Ovary (tissue), 10 donors: ENCODE measurements at regions of chr11 and their contacts with region 1.

Region 1: GRCh38 chr11:129943036-129943435 is 47.7 kb upstream of the NFRKB start:
- DNase-seq: no peak
- H3K4me3 ChIP-seq: no peak overlapping the region
- H3K27ac ChIP-seq: no peak overlapping the region
- H3K4me1 ChIP-seq: no peaks in the 10 kb centered on the region
- H3K27me3 ChIP-seq: no peaks in the 10 kb centered on the region
- CTCF ChIP-seq: no peak
- EP300 ChIP-seq: no peak
- POLR2A ChIP-seq: no peak

Region 2: GRCh38 chr11:130124096-130124495 is 181.1 kb after region 1 on chr11:
- intact Hi-C with region 1: loop called in 1 of 4 experiments (anchors 5 kb)
- DNase-seq: peak in 1 of 5 donors; percentile 38
- H3K4me3 ChIP-seq: no peak overlapping the region
- H3K27ac ChIP-seq: no peak overlapping the region
- H3K4me1 ChIP-seq: no peaks in the 10 kb centered on the region
- H3K27me3 ChIP-seq: no peaks in the 10 kb centered on the region
- CTCF ChIP-seq: no peak
- EP300 ChIP-seq: no peak
- POLR2A ChIP-seq: no peak